Activated CD4-positive, alpha-beta memory T cell treated with anti-CD3 and anti-CD28 coated beads for 36 hours (primary cell): ENCODE measurements at regions of chr1 and their contacts with region 1.

Region 1: GRCh38 chr1:198638894-198639635 is at the start of gene PTPRC:
- DNase-seq: no peak
- H3K4me3 Mint-ChIP-seq: peak within 1 kb of the TSS; percentile 89
- H3K27ac Mint-ChIP-seq: peak within 1 kb of the TSS; percentile 98
- H3K4me1 Mint-ChIP-seq: peaks cover 47% of the 10 kb centered on the region
- H3K27me3 Mint-ChIP-seq: no peaks in the 10 kb centered on the region
- total RNA-seq, gene PTPRC: 495 to 503 TPM

Region 2: GRCh38 chr1:198549866-198550265 is 89.2 kb before region 1 on chr1:
- CTCF ChIA-PET with region 1: no interaction called
- POLR2A ChIA-PET with region 1: no interaction called
- intact Hi-C with region 1: no loop called
- DNase-seq: no peak
- H3K4me3 Mint-ChIP-seq: no peak overlapping the region
- H3K27ac Mint-ChIP-seq: no peak overlapping the region
- H3K4me1 Mint-ChIP-seq: peaks cover 40% of the 10 kb centered on the region
- H3K27me3 Mint-ChIP-seq: no peaks in the 10 kb centered on the region

Region 3: DNA sequence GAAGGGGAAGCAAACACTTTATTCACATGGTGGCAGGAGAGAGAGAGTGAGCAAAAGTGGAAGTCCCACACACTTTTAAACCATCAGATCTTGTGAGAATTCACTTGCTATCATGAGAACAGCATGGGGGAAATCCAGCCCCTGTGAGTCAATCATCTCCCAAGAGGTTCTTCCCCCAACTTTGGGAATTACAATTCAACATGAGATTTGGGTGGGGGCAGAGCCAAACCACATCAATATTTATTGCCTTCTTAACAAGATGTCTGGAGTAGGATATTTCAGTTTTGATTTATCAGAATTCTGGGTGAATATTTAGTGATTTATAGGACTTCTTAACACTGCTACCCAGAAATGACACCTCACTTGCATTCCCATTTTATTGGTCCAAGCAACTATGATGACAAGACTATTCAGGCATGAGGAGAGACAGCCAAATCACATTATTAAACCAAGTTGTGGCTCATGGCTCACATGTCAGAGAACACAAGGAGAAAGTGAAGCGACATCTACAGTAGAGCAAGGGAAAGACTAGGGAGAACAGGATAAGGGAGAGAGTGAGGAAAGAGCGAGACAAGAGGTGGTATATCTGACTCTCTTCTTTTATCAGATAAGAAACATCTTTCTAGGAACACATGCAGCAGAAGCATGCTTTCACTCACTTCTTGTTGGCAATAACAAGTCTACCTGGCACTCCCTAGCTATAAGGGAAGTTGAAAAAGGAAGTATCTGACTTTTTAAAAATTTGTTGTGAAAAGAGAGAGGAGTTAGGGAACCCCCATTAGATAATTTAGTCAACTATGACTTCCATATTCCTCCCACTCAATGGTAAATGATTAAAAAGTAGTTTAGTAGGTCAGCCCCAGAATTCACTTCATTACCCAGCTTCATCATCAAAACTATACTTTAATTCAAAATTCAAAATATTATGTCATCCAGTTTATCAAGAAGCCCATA is 36.9 kb before region 1 on chr1:
- CTCF ChIA-PET with region 1: interaction called, 3 read pairs
- POLR2A ChIA-PET with region 1: no interaction called
- intact Hi-C with region 1: loop called (anchors 1 kb)
- DNase-seq: peak; percentile 72
- H3K4me3 Mint-ChIP-seq: peak overlapping the region; percentile 33
- H3K27ac Mint-ChIP-seq: peak overlapping the region; percentile 77
- H3K4me1 Mint-ChIP-seq: peaks cover 79% of the 10 kb centered on the region
- H3K27me3 Mint-ChIP-seq: no peaks in the 10 kb centered on the region

Region 4: GRCh38 chr1:198612471-198613260 is 26.4 kb before region 1 on chr1:
- CTCF ChIA-PET with region 1: interaction called, 3 read pairs
- POLR2A ChIA-PET with region 1: interaction called, 22 read pairs
- intact Hi-C with region 1: loop called (anchors 1 kb)
- DNase-seq: no peak
- H3K4me3 Mint-ChIP-seq: peak overlapping the region; percentile 79
- H3K27ac Mint-ChIP-seq: peak overlapping the region; percentile 97
- H3K4me1 Mint-ChIP-seq: peaks cover 71% of the 10 kb centered on the region
- H3K27me3 Mint-ChIP-seq: no peaks in the 10 kb centered on the region

Region 5: GRCh38 chr1:198620951-198621824 is 17.9 kb before region 1 on chr1:
- CTCF ChIA-PET with region 1: interaction called, 13 read pairs
- POLR2A ChIA-PET with region 1: interaction called, 61 read pairs
- intact Hi-C with region 1: loop called (anchors 1 kb)
- DNase-seq: peak; percentile 84
- H3K4me3 Mint-ChIP-seq: peak overlapping the region; percentile 74
- H3K27ac Mint-ChIP-seq: peak overlapping the region; percentile 94
- H3K4me1 Mint-ChIP-seq: peaks cover 87% of the 10 kb centered on the region
- H3K27me3 Mint-ChIP-seq: no peaks in the 10 kb centered on the region

Region 6: DNA sequence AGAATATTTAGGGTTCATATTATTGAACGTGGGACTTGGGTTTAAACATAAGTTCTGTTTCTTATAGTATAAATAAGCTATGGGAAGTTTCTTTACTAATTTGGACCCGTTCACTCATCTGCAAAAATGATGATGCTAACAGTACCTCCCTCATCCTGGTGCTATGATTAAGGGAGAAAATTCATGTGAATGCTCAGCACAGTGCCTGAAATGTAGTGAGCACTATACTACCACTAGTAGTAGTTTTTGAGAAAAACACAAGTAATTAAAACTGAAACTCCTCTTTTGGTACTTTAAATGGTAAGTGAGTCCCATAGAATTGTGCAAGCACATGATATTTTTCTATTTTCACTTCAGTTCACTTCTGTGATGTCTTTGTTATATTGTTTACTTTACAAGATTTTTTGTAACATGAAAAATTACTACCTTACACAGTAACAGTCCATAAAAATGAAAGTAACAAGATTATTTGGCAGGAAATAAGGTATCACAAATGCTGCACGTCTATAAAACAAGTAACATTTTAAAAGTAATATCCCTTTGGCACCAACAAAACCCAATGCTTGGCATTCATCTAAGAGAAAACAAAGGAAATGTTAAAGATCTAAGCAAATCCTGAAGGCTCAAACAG is 11.5 kb before region 1 on chr1:
- CTCF ChIA-PET with region 1: interaction called, 5 read pairs
- POLR2A ChIA-PET with region 1: interaction called, 61 read pairs
- intact Hi-C with region 1: loop called (anchors 1 kb)
- DNase-seq: no peak
- H3K4me3 Mint-ChIP-seq: peak overlapping the region; percentile 33
- H3K27ac Mint-ChIP-seq: peak overlapping the region; percentile 78
- H3K4me1 Mint-ChIP-seq: peaks cover 91% of the 10 kb centered on the region
- H3K27me3 Mint-ChIP-seq: no peaks in the 10 kb centered on the region

Region 7: DNA sequence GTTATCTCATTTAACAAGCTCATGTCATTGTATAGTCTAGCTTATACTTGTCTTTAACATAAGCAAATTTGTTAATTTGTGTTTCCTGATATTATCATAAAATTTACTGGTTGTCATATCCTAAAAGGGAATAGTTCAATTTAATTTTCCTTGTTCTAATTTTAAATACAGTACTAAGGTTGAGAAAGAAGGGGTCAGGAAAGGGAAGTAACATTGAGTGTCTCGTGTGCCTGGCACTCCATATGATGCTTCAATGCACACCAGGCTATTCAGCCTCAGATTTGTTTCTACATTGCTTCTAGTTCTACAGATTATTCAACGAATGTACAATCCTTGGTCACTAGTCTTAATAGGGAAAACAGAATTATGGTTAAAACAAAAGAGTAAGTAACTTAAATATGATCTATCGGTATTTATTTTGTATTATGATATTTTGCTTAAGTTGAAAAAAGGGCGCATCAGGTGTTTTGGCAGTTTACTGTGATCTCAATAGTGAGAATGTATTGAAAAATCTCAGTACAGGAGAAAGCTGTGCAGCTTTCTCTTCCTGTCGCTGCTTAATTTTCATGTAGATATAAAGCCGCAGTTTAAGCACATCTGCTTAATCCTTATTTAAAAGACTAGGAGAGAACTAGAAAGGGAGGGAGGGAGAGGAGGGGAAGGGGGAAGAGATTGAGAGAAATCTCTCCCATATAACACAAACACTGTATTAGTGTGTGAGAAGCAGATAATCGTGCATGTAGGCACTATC is 12.8 kb after region 1 on chr1:
- CTCF ChIA-PET with region 1: interaction called, 4 read pairs
- POLR2A ChIA-PET with region 1: interaction called, 127 read pairs
- intact Hi-C with region 1: loop called (anchors 1 kb)
- DNase-seq: no peak
- H3K4me3 Mint-ChIP-seq: peak overlapping the region; percentile 72
- H3K27ac Mint-ChIP-seq: peak overlapping the region; percentile 97
- H3K4me1 Mint-ChIP-seq: peaks cover 69% of the 10 kb centered on the region
- H3K27me3 Mint-ChIP-seq: no peaks in the 10 kb centered on the region

Region 8: GRCh38 chr1:198657550-198658064 is 18.5 kb after region 1 on chr1:
- CTCF ChIA-PET with region 1: interaction called, 3 read pairs
- POLR2A ChIA-PET with region 1: interaction called, 127 read pairs
- intact Hi-C with region 1: loop called (anchors 1 kb)
- DNase-seq: no peak
- H3K4me3 Mint-ChIP-seq: peak overlapping the region; percentile 74
- H3K27ac Mint-ChIP-seq: peak overlapping the region; percentile 97
- H3K4me1 Mint-ChIP-seq: peaks cover 65% of the 10 kb centered on the region
- H3K27me3 Mint-ChIP-seq: no peaks in the 10 kb centered on the region